ENCODE measurements at regions of chr1 and their contacts with region 1.

Region 1: GRCh38 chr1:220217383-220217988 is 54.8 kb downstream of the RAB3GAP2 start:
- DNase-seq: peak; percentile 29
- H3K4me3 ChIP-seq: no peak overlapping the region
- H3K27ac ChIP-seq: no peak overlapping the region
- H3K4me1 ChIP-seq: no peaks in the 10 kb centered on the region
- H3K27me3 ChIP-seq: no peaks in the 10 kb centered on the region
- CTCF ChIP-seq: peak; percentile 13 to 26
- POLR2A ChIP-seq: no peak

Region 2: DNA sequence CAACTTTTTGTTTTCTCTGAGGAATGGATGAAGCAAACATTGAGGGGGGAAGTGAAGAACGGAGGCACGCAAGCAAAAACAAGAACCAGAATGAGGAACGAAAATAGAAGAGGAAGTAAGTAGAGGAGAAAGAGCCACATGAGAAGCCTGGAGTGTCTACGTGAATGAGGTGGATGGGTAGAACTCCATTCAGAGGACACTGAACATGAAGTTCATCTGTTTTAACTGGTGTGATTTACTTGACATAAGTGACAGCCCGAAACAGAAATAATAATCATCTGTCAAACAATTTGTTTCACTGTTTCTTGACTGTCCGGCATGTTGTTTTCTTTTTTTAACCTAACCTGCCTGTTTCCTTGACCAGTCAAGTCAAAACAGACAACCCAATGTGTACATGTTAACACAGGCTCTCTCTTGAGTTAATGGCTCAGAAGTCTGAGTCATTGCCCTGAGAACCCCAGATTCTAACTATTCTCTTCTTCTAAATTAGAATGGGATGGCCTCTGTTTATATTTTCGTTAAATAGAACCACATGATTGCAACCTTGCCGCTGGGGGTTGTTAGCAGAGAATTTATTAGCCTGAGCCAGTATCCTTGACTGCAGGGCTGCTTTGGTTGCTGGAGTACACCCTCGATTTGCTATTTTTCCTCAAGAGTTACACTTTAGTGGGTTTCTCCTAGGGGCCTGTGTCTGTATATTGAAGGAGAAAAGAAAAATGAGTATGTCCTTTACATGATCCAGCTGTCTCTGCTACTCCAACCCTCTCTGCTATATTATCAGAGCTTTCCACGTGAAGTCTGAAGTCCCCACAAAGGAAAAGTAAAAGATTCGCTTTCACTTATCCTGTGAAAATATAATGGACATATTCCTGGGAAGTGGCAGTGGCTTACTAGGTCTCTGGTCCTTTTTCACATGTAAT is 756.3 kb before region 1 on chr1:
- CTCF ChIA-PET with region 1: no interaction called
- POLR2A ChIA-PET with region 1: no interaction called
- dilution Hi-C with region 1: no loop called
- intact Hi-C with region 1: no loop called
- DNase-seq: no peak
- H3K4me3 ChIP-seq: no peak overlapping the region
- H3K27ac ChIP-seq: no peak overlapping the region
- H3K4me1 ChIP-seq: no peaks in the 10 kb centered on the region
- H3K27me3 ChIP-seq: no peaks in the 10 kb centered on the region
- CTCF ChIP-seq: no peak
- POLR2A ChIP-seq: no peak

Region 3: DNA sequence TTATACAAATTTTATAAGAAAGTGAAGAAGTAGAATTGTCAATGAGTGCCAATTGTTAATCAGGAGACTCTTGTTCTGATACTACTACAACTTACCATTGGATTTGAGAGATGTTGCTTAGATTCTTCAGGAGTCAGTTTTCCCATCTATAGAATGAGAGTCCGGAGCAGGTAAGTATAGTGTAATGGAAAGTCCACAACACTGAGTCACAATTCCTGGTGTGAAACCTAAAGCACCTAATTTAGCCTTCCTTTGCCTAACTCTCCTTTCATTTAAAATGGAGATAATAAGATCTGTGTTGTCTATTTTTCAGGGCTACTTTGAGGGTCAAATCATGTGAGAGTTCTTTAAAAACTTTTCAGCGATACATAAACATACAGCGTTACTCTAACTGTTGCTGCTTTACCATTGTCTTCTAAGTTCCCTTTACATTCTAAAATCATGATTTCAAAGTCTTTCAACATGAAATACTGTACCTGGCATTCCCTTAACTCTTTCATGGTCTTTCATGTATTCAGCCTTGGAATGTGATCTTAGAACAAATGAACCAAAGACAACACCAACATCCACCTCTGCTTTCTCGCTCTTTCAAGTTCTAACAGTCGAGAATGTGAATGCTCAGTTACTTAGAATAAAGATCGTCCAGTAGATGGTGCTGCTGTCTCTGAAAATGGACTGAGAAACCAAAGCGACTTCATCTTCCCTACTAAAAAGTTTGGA is 380.1 kb before region 1 on chr1:
- CTCF ChIA-PET with region 1: no interaction called
- POLR2A ChIA-PET with region 1: no interaction called
- dilution Hi-C with region 1: no loop called
- intact Hi-C with region 1: loop called (anchors 10 kb)
- DNase-seq: peak; percentile 55
- H3K4me3 ChIP-seq: no peak overlapping the region
- H3K27ac ChIP-seq: no peak overlapping the region
- H3K4me1 ChIP-seq: no peaks in the 10 kb centered on the region
- H3K27me3 ChIP-seq: no peaks in the 10 kb centered on the region
- CTCF ChIP-seq: peak; percentile 19 to 29
- POLR2A ChIP-seq: no peak

Region 4: DNA sequence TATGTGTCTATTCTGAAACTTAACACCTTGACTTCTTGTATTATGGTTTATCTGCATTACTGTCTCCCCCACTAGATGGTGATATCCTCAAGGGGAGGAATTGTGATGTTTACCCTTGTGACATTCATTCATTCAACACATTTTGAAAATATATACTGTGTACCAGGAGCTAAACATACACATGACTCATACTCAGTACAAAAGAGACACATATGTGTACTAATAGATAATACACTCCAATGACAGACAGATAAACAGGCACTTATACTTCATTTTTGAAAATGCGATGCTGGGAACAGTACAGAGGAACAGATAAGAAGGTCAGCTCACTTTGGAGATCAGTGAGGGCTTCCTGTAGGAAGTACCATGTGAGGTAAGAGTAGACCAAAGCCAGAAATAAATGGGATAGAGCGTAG is 63.7 kb after region 1 on chr1:
- CTCF ChIA-PET with region 1: interaction called, 24 read pairs
- POLR2A ChIA-PET with region 1: no interaction called
- dilution Hi-C with region 1: no loop called
- intact Hi-C with region 1: no loop called
- DNase-seq: peak; percentile 53
- H3K4me3 ChIP-seq: no peak overlapping the region
- H3K27ac ChIP-seq: no peak overlapping the region
- H3K4me1 ChIP-seq: no peaks in the 10 kb centered on the region
- H3K27me3 ChIP-seq: peaks cover 20 to 24% of the 10 kb centered on the region in 2 experiments
- CTCF ChIP-seq: peak; percentile 17 to 18
- POLR2A ChIP-seq: no peak

Region 5: GRCh38 chr1:220803401-220804201 is 586.1 kb after region 1 on chr1:
- CTCF ChIA-PET with region 1: interaction called, 7 read pairs
- POLR2A ChIA-PET with region 1: no interaction called
- dilution Hi-C with region 1: no loop called
- intact Hi-C with region 1: loop called (anchors 1 kb)
- DNase-seq: peak; percentile 59
- H3K4me3 ChIP-seq: no peak overlapping the region
- H3K27ac ChIP-seq: no peak overlapping the region
- H3K4me1 ChIP-seq: no peaks in the 10 kb centered on the region
- H3K27me3 ChIP-seq: peaks cover 6 to 11% of the 10 kb centered on the region in 2 experiments
- CTCF ChIP-seq: peak; percentile 62 to 83
- POLR2A ChIP-seq: no peak

Measured in endothelial cell of umbilical vein (primary cell).